WTC11 (cell line): ENCODE measurements at regions of chr15 and their contacts with region 1.

Region 1: GRCh38 chr15:79596051-79596507 is 163.9 kb downstream of the MINAR1 start:
- DNase-seq: peak; percentile 72
- ATAC-seq: peak; percentile 98
- H3K4me3 Mint-ChIP-seq: no peak overlapping the region
- H3K27ac Mint-ChIP-seq: no peak overlapping the region
- H3K4me1 Mint-ChIP-seq: no peaks in the 10 kb centered on the region
- H3K27me3 Mint-ChIP-seq: no peaks in the 10 kb centered on the region; the same call in 1 of the 2 replicates
- CTCF ChIP-seq: peak; percentile 89

Region 2: DNA sequence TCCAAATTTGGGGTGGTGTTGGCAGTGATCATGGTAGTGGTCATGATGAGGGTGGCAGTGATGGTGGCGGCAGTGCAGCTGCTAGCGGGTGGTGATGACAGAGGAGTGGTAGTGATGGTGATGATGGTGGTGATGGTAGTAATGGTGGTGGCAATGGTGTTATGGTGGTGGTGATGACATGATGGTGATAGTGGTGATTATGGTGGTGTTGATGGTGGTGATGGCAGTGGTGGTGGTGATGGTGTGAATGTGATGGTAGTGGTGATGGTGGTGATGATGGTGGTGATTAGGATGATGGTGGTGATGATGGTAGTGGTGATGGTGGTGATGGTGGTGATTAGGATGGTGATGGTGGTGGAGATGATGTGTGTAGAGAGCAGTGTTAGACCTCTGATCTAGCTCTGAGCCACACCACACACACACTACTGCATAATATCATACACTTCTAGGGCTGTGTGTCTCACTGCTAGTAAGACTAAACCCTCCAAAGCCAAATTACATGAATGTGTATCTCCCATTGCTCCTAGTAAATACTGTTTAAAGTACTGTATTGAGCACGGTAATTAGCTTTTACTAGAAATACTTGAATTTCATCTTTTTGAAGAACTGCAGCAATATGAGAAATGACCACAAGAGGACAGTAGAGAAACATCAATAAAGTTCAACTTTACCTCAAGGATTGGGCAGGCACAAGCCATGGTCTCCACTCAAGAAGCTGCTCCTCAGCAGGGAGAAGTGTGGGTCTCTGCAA is 256.3 kb before region 1 on chr15:
- CTCF ChIA-PET with region 1: interaction called, 61 read pairs
- POLR2A ChIA-PET with region 1: interaction called, 3 read pairs
- DNase-seq: no peak
- ATAC-seq: peak; percentile 53; the same call in 1 of the 2 replicates
- H3K4me3 Mint-ChIP-seq: no peak overlapping the region
- H3K27ac Mint-ChIP-seq: no peak overlapping the region
- H3K4me1 Mint-ChIP-seq: 0 out of 2 replicates have a peak, but pooled peaks cover 3% of the 10 kb centered on the region
- H3K27me3 Mint-ChIP-seq: no peaks in the 10 kb centered on the region
- CTCF ChIP-seq: peak; percentile 68

Region 3: DNA sequence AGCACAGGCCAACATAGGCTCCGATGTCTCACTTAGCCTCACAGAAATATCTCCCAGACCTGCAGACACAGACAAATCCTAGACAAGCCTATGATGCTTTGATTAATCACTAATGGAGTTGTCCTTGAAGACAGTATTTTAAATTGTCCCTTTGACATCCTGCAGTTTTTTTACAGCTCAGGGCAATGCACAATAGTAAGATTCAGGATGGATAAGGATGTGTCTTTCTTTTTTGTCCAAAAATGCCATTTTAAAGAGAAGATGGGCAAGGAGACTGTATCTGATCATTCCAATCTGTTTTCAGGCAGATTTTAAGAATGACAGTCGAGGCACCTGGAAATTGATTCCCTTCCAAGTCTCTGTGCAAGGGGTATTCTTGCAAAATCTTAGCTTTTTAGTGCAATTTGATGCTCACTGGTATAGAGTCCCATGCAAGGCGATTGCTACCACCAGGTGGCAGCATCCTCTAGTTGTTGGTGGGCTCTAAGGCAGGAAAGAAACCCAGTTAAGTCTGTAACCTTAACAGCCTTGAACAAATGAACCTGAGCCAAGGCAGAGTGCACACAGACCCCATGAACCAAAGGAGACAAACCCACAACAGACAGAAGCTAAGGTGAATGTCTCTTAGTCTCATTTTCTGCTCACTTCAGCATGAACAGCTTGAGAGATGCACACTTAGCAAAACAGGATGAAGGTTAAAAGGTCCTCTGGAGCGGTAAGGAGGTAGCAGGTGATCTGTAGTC is 215.2 kb before region 1 on chr15:
- CTCF ChIA-PET with region 1: interaction called, 150 read pairs
- POLR2A ChIA-PET with region 1: no interaction called
- DNase-seq: peak; percentile 85
- ATAC-seq: peak; percentile 99
- H3K4me3 Mint-ChIP-seq: no peak overlapping the region
- H3K27ac Mint-ChIP-seq: no peak overlapping the region
- H3K4me1 Mint-ChIP-seq: no peaks in the 10 kb centered on the region; the same call in 1 of the 2 replicates
- H3K27me3 Mint-ChIP-seq: no peaks in the 10 kb centered on the region
- CTCF ChIP-seq: peak; percentile 85

Region 4: DNA sequence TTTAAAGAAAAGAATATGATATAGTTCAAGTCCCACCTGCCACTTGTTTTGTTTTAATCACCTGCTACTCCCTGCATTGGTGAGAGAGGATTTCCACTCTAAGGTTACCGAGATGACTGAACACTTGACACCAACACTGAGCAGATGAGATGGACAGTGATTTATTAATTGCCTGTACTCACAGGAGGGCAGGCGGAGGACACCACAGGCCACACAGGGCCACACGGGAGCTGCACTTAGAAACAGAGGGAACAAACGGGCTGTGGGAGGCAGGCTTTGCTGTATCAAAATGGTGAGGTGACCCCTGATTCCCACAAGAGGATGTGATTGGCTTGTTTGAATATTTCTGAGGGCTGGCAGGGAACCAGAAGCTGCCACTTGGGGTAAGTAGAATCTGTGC is 153.2 kb before region 1 on chr15:
- CTCF ChIA-PET with region 1: interaction called, 15 read pairs
- POLR2A ChIA-PET with region 1: no interaction called
- DNase-seq: no peak
- ATAC-seq: no peak
- H3K4me3 Mint-ChIP-seq: no peak overlapping the region
- H3K27ac Mint-ChIP-seq: no peak overlapping the region
- H3K4me1 Mint-ChIP-seq: peaks cover 8% of the 10 kb centered on the region
- H3K27me3 Mint-ChIP-seq: no peaks in the 10 kb centered on the region; the same call in 1 of the 2 replicates
- CTCF ChIP-seq: no peak

Region 5: DNA sequence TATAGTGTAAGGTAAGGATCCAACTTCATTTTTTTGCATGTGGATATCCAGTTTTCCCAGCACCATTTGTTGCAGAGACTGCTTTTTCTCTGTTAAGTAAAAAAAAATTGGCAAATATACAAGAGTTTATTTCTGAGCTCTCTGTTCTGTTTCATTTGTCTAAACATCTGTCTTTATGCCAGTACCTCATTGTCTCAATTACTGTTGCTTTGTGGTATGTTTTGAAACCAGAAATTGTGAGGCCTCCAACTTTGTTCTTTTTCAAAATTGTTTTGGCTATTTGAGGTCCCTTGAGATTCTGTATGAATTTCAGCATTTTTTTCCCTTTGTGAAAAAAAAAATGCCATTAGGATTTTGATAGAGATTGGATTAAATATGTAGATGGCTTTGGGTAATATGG is 13.4 kb before region 1 on chr15:
- CTCF ChIA-PET with region 1: interaction called, 24 read pairs
- POLR2A ChIA-PET with region 1: no interaction called
- DNase-seq: no peak
- ATAC-seq: no peak
- H3K4me3 Mint-ChIP-seq: no peak overlapping the region
- H3K27ac Mint-ChIP-seq: no peak overlapping the region
- H3K4me1 Mint-ChIP-seq: no peaks in the 10 kb centered on the region
- H3K27me3 Mint-ChIP-seq: no peaks in the 10 kb centered on the region
- CTCF ChIP-seq: no peak

Region 6: DNA sequence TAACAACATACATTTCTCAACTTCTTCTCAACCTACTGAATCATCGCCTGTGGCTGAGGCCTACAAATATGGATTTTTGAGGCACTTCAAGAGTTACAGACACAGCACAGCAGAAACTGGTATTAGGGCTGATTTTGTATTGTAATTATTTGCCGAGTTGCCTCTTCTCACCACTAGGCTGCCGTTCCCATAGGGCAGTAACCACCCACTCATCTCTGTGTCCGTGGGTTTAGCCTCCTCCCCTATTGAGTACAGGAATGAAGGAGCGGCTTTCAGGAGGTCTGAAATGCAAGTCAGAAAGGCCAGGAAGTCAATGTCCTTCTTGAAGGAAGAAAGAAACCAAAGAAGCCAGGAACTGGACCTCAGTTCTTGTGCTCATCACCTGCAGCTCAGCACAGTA is 79.9 kb after region 1 on chr15:
- CTCF ChIA-PET with region 1: interaction called, 12 read pairs
- POLR2A ChIA-PET with region 1: no interaction called
- DNase-seq: no peak
- ATAC-seq: no peak; the same call in 1 of the 2 replicates
- H3K4me3 Mint-ChIP-seq: no peak overlapping the region
- H3K27ac Mint-ChIP-seq: no peak overlapping the region
- H3K4me1 Mint-ChIP-seq: peaks cover 47% of the 10 kb centered on the region
- H3K27me3 Mint-ChIP-seq: no peaks in the 10 kb centered on the region; the same call in 1 of the 2 replicates
- CTCF ChIP-seq: no peak

Region 7: GRCh38 chr15:79765028-79765546 is 169.0 kb after region 1 on chr15:
- CTCF ChIA-PET with region 1: no interaction called
- POLR2A ChIA-PET with region 1: no interaction called
- DNase-seq: no peak
- ATAC-seq: no peak
- H3K4me3 Mint-ChIP-seq: no peak overlapping the region
- H3K27ac Mint-ChIP-seq: no peak overlapping the region
- H3K4me1 Mint-ChIP-seq: no peaks in the 10 kb centered on the region
- H3K27me3 Mint-ChIP-seq: 0 out of 2 replicates have a peak, but pooled peaks cover 4% of the 10 kb centered on the region
- CTCF ChIP-seq: no peak